Ovary (tissue), 10 donors: ENCODE measurements at regions of chr11 and their contacts with region 1.

Region 1: GRCh38 chr11:65968600-65969482 is 7.3 kb downstream of the SART1 start:
- DNase-seq: no peak
- H3K4me3 ChIP-seq: no peak overlapping the region
- H3K27ac ChIP-seq: no peak overlapping the region
- H3K4me1 ChIP-seq: no peaks in the 10 kb centered on the region
- H3K27me3 ChIP-seq: no peaks in the 10 kb centered on the region
- CTCF ChIP-seq: no peak
- EP300 ChIP-seq: no peak
- POLR2A ChIP-seq: no peak

Region 2: GRCh38 chr11:65919146-65920033 is 49.5 kb before region 1 on chr11 and contains the start of gene DRAP1:
- intact Hi-C with region 1: loop called in 1 of 4 experiments (anchors 5 kb)
- DNase-seq: peak; percentile 99
- H3K4me3 ChIP-seq: peak within 1 kb of the TSS; percentile 92
- H3K27ac ChIP-seq: peak within 1 kb of the TSS; percentile 79 to 84
- H3K4me1 ChIP-seq: peaks cover 37% of the 10 kb centered on the region
- H3K27me3 ChIP-seq: no peaks in the 10 kb centered on the region
- CTCF ChIP-seq: no peak
- EP300 ChIP-seq: no peak
- POLR2A ChIP-seq: peak; percentile 63
- total RNA-seq, gene DRAP1: 40.2 to 84.4 (median 78.3) TPM

Region 3: DNA sequence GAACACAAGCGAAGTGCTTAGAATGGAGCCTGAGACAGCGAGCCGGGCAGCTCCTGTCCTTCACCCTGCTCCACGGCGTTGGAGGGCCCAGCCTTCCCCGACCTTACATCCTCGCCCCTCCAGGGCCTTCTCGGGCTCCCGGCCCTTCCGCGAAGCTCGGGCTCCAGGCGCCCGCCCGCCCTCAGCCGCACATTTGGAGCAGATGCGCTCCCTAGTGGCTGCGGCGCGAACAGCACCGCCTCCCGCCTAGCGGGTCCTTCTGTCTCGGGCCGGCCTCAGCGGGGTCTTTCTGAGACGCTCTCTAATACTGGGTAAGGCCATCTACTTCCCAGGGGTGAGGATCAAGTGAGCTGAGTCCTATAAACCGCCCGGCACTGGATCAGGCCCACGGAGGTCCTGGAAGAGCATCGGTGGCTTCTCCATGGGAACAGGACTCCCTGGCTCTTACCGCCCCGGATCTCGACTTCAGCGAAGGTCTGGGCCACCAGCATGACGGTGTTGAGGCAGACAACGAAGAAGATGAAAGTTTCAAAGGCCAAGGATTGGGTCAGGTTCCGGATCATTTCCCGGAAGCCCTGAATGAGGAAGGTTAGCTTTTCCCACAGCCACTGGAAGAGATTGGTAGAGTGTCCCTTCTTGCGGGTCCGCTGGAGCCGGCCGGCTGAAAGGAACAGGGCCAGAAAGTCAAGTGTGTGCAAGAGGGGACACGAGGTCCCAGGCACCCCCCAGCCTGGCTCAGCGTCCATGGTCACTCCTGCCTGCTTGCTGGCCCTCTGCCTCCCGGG is 53.8 kb after region 1 on chr11:
- intact Hi-C with region 1: no loop called
- DNase-seq: peak; percentile 50 to 84 (median 70)
- H3K4me3 ChIP-seq: no peak overlapping the region
- H3K27ac ChIP-seq: no peak overlapping the region
- H3K4me1 ChIP-seq: no peaks in the 10 kb centered on the region
- H3K27me3 ChIP-seq: no peaks in the 10 kb centered on the region
- CTCF ChIP-seq: peak; percentile 80 to 90 (median 80)
- EP300 ChIP-seq: no peak
- POLR2A ChIP-seq: no peak